ENCODE measurements at regions of chr17 and their contacts with region 1.

Region 1: GRCh38 chr17:8173056-8173870 is 2.9 kb downstream of the TMEM107 start:
- DNase-seq: peak; percentile 95
- ATAC-seq: peak; percentile 83
- H3K4me3 ChIP-seq: peak overlapping the region; percentile 32 to 96 (median 63)
- H3K4me3 Mint-ChIP-seq: peak overlapping the region; percentile 94
- H3K27ac ChIP-seq: peak overlapping the region; percentile 95 to 99
- H3K27ac Mint-ChIP-seq: peak overlapping the region; percentile 100
- H3K4me1 ChIP-seq: peaks cover 24 to 38% of the 10 kb centered on the region in 2 donors
- H3K4me1 Mint-ChIP-seq: peaks cover 46% of the 10 kb centered on the region
- H3K27me3 ChIP-seq: no peaks in the 10 kb centered on the region
- H3K27me3 Mint-ChIP-seq: no peaks in the 10 kb centered on the region
- CTCF ChIP-seq: no peak

Region 2: DNA sequence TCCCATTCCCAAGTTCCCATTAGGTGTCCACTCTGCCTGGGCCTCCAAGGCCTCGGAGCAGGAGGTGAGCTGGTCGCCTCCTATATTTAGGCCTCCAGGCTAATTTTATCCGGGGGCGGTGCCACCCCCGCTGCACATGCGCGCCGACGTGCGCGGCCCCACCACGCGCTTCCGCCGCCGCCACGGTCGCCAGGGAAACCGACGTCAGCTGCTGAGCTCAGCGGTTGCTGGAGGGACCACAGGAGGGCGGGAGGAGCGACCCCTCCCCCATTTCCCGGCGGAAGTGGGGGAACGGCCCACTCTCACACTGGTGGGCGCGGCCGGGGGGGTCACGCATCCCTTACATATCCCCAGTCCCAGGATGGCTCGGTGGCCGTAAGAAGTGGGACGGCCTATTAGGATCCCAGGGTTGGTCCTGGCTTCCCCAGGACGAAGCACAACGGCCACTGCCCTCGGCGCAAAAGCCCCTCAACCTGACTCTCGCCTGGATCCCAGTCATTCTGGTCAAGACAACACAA is 22.1 kb before region 1 on chr17:
- CTCF ChIA-PET with region 1: interaction called, 4 read pairs
- POLR2A ChIA-PET with region 1: interaction called, 14 read pairs
- intact Hi-C with region 1: loop called (anchors 1 kb)
- DNase-seq: peak; percentile 95
- ATAC-seq: peak; percentile 60
- H3K4me3 ChIP-seq: peak overlapping the region; percentile 9 to 76 (median 69)
- H3K4me3 Mint-ChIP-seq: peak overlapping the region; percentile 94
- H3K27ac ChIP-seq: peak overlapping the region; percentile 63 to 80
- H3K27ac Mint-ChIP-seq: peak overlapping the region; percentile 87
- H3K4me1 ChIP-seq: peaks cover 50 to 64% of the 10 kb centered on the region in 2 donors
- H3K4me1 Mint-ChIP-seq: peaks cover 42% of the 10 kb centered on the region
- H3K27me3 ChIP-seq: no peaks in the 10 kb centered on the region
- H3K27me3 Mint-ChIP-seq: no peaks in the 10 kb centered on the region
- CTCF ChIP-seq: no peak

Region 3: DNA sequence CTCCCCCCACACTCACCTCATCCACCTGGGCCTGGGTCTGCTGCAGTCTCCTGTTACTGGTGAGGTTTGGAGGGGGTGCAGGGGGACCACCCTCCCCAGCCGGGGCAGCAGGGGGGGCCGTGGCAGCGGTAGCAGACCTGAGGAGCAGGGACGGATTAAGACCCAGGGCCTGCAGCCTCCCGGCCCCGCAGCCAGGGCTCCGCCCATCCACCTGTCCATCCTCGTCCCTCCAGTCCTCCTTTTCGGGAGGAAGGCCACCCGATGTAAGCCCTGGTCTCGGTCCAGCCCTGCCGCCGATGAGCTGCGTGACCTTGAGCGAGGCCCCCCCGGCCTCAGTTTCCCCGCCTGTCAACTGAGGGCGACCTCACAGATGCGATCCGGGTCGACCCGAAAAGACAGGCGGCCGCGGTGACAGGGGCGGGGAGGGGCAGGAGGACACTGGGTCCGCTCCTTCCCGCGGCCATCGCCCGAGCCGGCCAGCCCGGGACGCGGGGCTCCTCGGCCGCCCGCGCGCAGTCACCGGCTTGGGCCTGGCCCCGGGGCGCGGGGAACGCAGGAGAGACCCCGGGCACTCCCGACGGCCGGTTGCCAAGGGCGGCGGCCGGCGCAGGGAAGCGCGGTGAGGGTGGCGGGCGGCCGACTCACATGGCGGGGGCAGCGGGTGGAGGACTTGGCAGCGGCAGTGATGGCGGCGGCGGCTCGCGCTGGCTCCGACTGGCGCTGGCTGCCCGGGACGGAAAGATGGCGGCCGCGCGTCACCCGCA is 10.8 kb before region 1 on chr17 and contains the start of gene VAMP2:
- CTCF ChIA-PET with region 1: interaction called, 11 read pairs
- POLR2A ChIA-PET with region 1: interaction called, 18 read pairs
- intact Hi-C with region 1: loop called (anchors 1 kb)
- DNase-seq: peak; percentile 89
- ATAC-seq: peak; percentile 69
- H3K4me3 ChIP-seq: peak within 1 kb of the TSS; percentile 67 to 98 (median 94)
- H3K4me3 Mint-ChIP-seq: peak within 1 kb of the TSS; percentile 93
- H3K27ac ChIP-seq: peak within 1 kb of the TSS; percentile 94 to 99
- H3K27ac Mint-ChIP-seq: peak within 1 kb of the TSS; percentile 99
- H3K4me1 ChIP-seq: peaks cover 37 to 61% of the 10 kb centered on the region in 2 donors
- H3K4me1 Mint-ChIP-seq: peaks cover 49% of the 10 kb centered on the region
- H3K27me3 ChIP-seq: no peaks in the 10 kb centered on the region
- H3K27me3 Mint-ChIP-seq: no peaks in the 10 kb centered on the region
- CTCF ChIP-seq: no peak
- total RNA-seq, gene VAMP2: 154 and 162 TPM in 2 replicates

Region 4: GRCh38 chr17:8204761-8205555 is 31.7 kb after region 1 on chr17:
- CTCF ChIA-PET with region 1: interaction called, 3 read pairs
- POLR2A ChIA-PET with region 1: interaction called, 5 read pairs
- intact Hi-C with region 1: loop called (anchors 2 kb)
- DNase-seq: no peak
- ATAC-seq: no peak
- H3K4me3 ChIP-seq: no peak overlapping the region
- H3K4me3 Mint-ChIP-seq: no peak overlapping the region
- H3K27ac ChIP-seq: no peak overlapping the region
- H3K27ac Mint-ChIP-seq: no peak overlapping the region
- H3K4me1 ChIP-seq: peaks cover 2 to 16% of the 10 kb centered on the region in 2 donors
- H3K4me1 Mint-ChIP-seq: peaks cover 7% of the 10 kb centered on the region
- H3K27me3 ChIP-seq: no peaks in the 10 kb centered on the region
- H3K27me3 Mint-ChIP-seq: no peaks in the 10 kb centered on the region
- CTCF ChIP-seq: no peak